ENCODE measurements at regions of chr6 and their contacts with region 1.

Region 1: GRCh38 chr6:32971581-32972352 is 3.4 kb downstream of the BRD2 start:
- DNase-seq: peak; percentile 99 to 100 (median 100)
- ATAC-seq: peak; percentile 57
- H3K4me3 ChIP-seq: peak overlapping the region; percentile 78 to 98
- H3K4me3 Mint-ChIP-seq: peak overlapping the region; percentile 93
- H3K27ac ChIP-seq: peak overlapping the region; percentile 86 to 97
- H3K27ac Mint-ChIP-seq: peak overlapping the region; percentile 99
- H3K4me1 ChIP-seq: peaks cover 33% of the 10 kb centered on the region
- H3K4me1 Mint-ChIP-seq: peaks cover 47% of the 10 kb centered on the region
- H3K27me3 ChIP-seq: no peaks in the 10 kb centered on the region
- H3K27me3 Mint-ChIP-seq: no peaks in the 10 kb centered on the region
- CTCF ChIP-seq: no peak

Region 2: DNA sequence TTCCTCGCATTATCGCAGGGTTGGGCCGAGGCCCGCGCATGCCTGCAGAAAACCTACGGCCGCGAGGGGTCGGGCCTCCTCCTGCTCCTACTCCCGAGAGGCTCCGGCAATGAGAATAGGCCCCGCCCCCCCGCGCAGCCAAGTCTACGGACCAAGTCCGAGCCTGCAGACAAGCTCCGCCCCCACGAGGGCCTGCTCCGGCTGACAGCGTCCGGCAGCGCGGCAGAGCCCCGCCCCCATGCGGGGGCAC is 776.2 kb before region 1 on chr6:
- CTCF ChIA-PET with region 1: no interaction called
- POLR2A ChIA-PET with region 1: interaction called, 6 read pairs
- intact Hi-C with region 1: loop called (anchors 1 to 5 kb)
- DNase-seq: peak; percentile 99 to 100 (median 100)
- ATAC-seq: peak; percentile 80
- H3K4me3 ChIP-seq: peak overlapping the region; percentile 85 to 87
- H3K4me3 Mint-ChIP-seq: peak overlapping the region; percentile 90
- H3K27ac ChIP-seq: peak overlapping the region; percentile 94 to 97
- H3K27ac Mint-ChIP-seq: peak overlapping the region; percentile 95
- H3K4me1 ChIP-seq: peaks cover 33% of the 10 kb centered on the region
- H3K4me1 Mint-ChIP-seq: peaks cover 35% of the 10 kb centered on the region
- H3K27me3 ChIP-seq: no peaks in the 10 kb centered on the region
- H3K27me3 Mint-ChIP-seq: no peaks in the 10 kb centered on the region
- CTCF ChIP-seq: peak; percentile 10

Region 3: GRCh38 chr6:32868257-32868788 is 103.4 kb before region 1 on chr6:
- CTCF ChIA-PET with region 1: interaction called, 7 read pairs
- POLR2A ChIA-PET with region 1: interaction called, 27 read pairs
- intact Hi-C with region 1: no loop called
- DNase-seq: peak; percentile 72 to 93 (median 89)
- ATAC-seq: peak; percentile 80
- H3K4me3 ChIP-seq: no peak overlapping the region
- H3K4me3 Mint-ChIP-seq: no peak overlapping the region
- H3K27ac ChIP-seq: no peak overlapping the region
- H3K27ac Mint-ChIP-seq: no peak overlapping the region
- H3K4me1 ChIP-seq: peaks cover 29% of the 10 kb centered on the region
- H3K4me1 Mint-ChIP-seq: peaks cover 28% of the 10 kb centered on the region
- H3K27me3 ChIP-seq: no peaks in the 10 kb centered on the region
- H3K27me3 Mint-ChIP-seq: no peaks in the 10 kb centered on the region
- CTCF ChIP-seq: peak; percentile 96

Region 4: GRCh38 chr6:32940656-32941213 is 31.0 kb before region 1 on chr6 and contains the start of gene HLA-DMB:
- CTCF ChIA-PET with region 1: interaction called, 72 read pairs
- POLR2A ChIA-PET with region 1: interaction called, 222 read pairs
- intact Hi-C with region 1: loop called in 1 of 2 experiments (anchors 2 kb)
- DNase-seq: peak in 7 of 9 experiments; percentile 18 to 91 (median 51)
- ATAC-seq: peak; percentile 78
- H3K4me3 ChIP-seq: peak within 1 kb of the TSS; percentile 64 to 79
- H3K4me3 Mint-ChIP-seq: peak within 1 kb of the TSS; percentile 94
- H3K27ac ChIP-seq: peak within 1 kb of the TSS; percentile 72 to 91
- H3K27ac Mint-ChIP-seq: peak within 1 kb of the TSS; percentile 97
- H3K4me1 ChIP-seq: peaks cover 61% of the 10 kb centered on the region
- H3K4me1 Mint-ChIP-seq: peaks cover 62% of the 10 kb centered on the region
- H3K27me3 ChIP-seq: no peaks in the 10 kb centered on the region
- H3K27me3 Mint-ChIP-seq: no peaks in the 10 kb centered on the region
- CTCF ChIP-seq: no peak
- total RNA-seq, gene HLA-DMB: 8.9 to 9.9 TPM

Region 5: DNA sequence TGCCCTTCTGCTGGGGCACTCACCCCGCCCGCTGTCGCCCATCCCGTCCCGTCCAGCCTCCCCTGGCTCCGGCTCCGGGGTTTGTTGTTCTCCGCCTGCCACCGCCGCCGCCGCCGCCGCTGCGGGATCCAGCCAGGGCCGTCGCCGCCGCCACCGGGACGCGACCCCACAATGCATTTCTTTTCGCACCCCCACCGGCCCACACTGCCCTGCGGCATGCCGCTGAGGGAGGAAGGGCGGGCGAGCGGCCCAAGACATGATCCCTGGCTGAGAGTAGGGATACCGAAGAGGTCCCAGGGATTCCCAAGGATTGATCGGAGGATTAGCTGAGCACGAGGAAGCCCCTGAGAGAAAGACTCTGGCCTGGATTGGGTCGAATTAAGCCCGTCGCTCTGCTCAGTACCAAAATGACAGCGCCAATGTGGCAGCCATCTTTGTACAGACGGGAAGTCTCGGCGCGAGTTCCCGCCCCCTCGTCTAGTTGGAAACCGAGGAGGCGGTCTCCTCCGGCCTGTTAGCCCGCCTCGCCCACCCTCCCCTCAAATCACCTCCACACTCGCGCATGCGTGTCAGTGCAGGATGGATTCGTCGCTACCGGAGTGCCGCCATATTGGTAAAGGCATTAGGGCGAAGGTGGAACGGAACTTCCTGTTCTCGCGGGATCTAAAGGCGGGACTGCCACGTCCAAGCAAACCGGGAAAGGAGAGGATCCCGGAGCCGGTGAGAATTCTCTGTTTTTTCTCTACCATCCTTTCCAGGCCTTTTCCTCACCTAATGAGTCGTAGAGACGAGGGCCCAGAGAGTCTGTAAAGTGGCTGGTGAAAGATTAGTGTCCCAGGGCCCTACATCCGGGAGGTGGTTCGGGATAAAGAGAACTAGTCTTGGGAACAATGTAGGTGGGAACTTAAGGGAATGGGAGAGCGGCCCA is 228.7 kb after region 1 on chr6 and contains the starts of genes RXRB and SLC39A7:
- CTCF ChIA-PET with region 1: no interaction called
- POLR2A ChIA-PET with region 1: no interaction called
- intact Hi-C with region 1: loop called in 1 of 2 experiments (anchors 2 kb)
- DNase-seq: peak; percentile 97 to 100 (median 99)
- ATAC-seq: peak; percentile 75
- H3K4me3 ChIP-seq: peak within 1 kb of the TSS; percentile 77 to 85
- H3K4me3 Mint-ChIP-seq: peak within 1 kb of the TSS; percentile 98
- H3K27ac ChIP-seq: peak within 1 kb of the TSS; percentile 89 to 94
- H3K27ac Mint-ChIP-seq: peak within 1 kb of the TSS; percentile 99
- H3K4me1 ChIP-seq: peaks cover 57% of the 10 kb centered on the region
- H3K4me1 Mint-ChIP-seq: peaks cover 78% of the 10 kb centered on the region
- H3K27me3 ChIP-seq: no peaks in the 10 kb centered on the region
- H3K27me3 Mint-ChIP-seq: no peaks in the 10 kb centered on the region
- CTCF ChIP-seq: no peak
- total RNA-seq, gene RXRB: 39.2 to 40.0 TPM
- total RNA-seq, gene SLC39A7: 9.7 to 11.0 TPM

Region 6: GRCh38 chr6:33410050-33410710 is 438.4 kb after region 1 on chr6:
- CTCF ChIA-PET with region 1: no interaction called
- POLR2A ChIA-PET with region 1: no interaction called
- intact Hi-C with region 1: loop called (anchors 2 to 5 kb)
- DNase-seq: peak; percentile 93 to 99 (median 99)
- ATAC-seq: peak; percentile 68
- H3K4me3 ChIP-seq: peak overlapping the region; percentile 82 to 95
- H3K4me3 Mint-ChIP-seq: peak overlapping the region; percentile 88
- H3K27ac ChIP-seq: peak overlapping the region; percentile 94 to 96
- H3K27ac Mint-ChIP-seq: peak overlapping the region; percentile 91
- H3K4me1 ChIP-seq: peaks cover 40% of the 10 kb centered on the region
- H3K4me1 Mint-ChIP-seq: peaks cover 47% of the 10 kb centered on the region
- H3K27me3 ChIP-seq: no peaks in the 10 kb centered on the region
- H3K27me3 Mint-ChIP-seq: no peaks in the 10 kb centered on the region
- CTCF ChIP-seq: no peak

Measured in CD8-positive, alpha-beta T cell (primary cell).